ENCODE measurements at regions of chr5 and their contacts with region 1.

Region 1: GRCh38 chr5:178732281-178732680 is 1.8 kb upstream of the ZNF354A start:
- DNase-seq: no peak
- ATAC-seq: no peak

Region 2: DNA sequence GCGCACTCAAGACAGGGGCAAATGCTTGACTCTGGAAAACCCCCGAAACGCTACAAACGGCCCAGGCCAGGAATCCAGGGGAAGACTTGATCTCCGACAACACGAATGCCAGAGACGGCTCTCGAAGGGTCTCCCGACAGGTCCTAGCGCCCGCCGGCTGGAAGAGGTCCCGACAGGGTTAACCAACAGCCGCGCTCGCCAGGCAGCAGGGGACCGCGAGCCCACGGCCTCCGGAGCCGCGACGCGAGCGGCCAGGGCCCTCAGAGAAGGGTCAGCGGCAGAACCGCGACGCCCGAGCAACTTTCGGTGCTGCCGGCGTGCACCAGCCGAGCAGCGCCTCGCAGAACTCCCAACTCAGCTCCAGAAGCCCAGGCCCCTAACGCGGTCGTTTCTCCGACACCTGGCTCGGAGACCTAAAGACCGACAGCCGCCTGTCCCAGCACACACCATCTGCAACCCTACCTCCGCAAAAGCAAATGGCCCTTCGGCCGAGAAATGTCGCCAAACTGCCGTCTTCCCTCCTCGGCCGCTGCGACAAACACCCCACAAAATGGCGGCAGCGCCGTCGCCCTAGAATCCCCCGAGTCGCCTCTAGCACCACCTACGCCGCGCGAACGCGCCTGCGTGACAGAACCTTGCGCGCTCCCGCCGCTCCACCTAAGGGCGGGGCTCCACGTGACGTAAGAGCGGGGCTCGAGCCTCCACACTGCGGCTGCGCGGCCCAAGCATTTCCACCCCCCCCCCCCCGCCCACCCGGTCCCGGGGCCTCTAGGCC is 105.6 kb before region 1 on chr5 and contains the start of gene CLK4:
- intact Hi-C with region 1: loop called (anchors 1 kb)
- DNase-seq: peak; percentile 99
- ATAC-seq: peak; percentile 98
- total RNA-seq, gene CLK4: 20.5 TPM

Region 3: GRCh38 chr5:178674334-178674733 is 57.9 kb before region 1 on chr5:
- intact Hi-C with region 1: no loop called
- DNase-seq: no peak
- ATAC-seq: no peak

Region 4: GRCh38 chr5:178859625-178860531 is 127.6 kb after region 1 on chr5 and contains the start of gene ZNF354B:
- intact Hi-C with region 1: loop called (anchors 1 kb)
- DNase-seq: peak; percentile 95
- ATAC-seq: peak; percentile 99
- total RNA-seq, gene ZNF354B: 6.0 TPM

Region 5: DNA sequence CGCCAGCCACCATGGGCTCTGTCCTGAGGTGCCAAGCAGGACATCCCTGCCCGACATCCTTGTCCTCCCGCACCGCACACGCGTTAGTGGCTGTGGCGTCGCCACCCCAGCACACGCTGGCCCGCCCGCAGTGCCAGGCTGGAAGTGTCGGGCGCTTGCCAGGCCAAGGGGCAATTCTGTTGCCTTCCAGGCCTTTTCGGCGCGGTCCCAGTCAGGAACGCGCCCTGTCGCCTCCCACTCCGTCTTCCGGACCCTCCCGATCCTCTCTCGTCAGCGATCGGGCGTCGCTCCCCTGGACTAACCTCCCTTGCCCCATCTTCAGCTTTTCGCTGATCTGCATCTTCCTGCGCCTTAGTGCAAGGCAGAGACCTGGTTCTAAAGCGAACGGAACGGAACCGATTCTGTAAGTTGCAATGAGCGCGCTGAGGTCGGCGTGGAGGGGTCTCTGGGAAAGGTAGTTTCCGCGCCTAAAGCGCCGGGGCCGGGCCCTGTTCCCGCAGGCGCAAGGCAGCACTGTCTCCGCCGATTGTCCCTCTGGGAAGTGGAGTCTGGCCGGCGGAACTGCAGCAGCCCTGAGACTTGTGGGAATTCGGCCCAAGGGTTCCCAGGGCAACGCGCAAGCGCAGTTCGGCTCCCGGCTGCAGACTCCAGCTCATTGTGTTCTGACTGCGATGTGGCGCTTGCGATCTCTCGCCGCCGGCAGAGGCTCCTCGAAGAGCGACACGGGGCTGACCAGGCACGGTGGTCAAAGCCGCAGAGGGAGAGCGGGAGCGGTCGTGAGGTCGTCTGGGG is 208.5 kb after region 1 on chr5 and contains the start of gene ZNF454:
- intact Hi-C with region 1: loop called (anchors 5 kb)
- DNase-seq: peak; percentile 94
- ATAC-seq: peak; percentile 99
- total RNA-seq, gene ZNF454: 1.8 TPM

Measured in Right ventricle myocardium inferior (tissue), 1 donor.